ENCODE measurements at regions of chr4 and their contacts with region 1.

Region 1: GRCh38 chr4:167234316-167234881 is at the start of gene SPOCK3:
- DNase-seq: peak; percentile 5
- H3K4me3 Mint-ChIP-seq: no peak within 1 kb of the TSS
- H3K27ac Mint-ChIP-seq: no peak within 1 kb of the TSS
- H3K4me1 Mint-ChIP-seq: peaks cover 5% of the 10 kb centered on the region
- H3K27me3 Mint-ChIP-seq: peaks cover 26% of the 10 kb centered on the region
- total RNA-seq, gene SPOCK3: not detected

Region 2: DNA sequence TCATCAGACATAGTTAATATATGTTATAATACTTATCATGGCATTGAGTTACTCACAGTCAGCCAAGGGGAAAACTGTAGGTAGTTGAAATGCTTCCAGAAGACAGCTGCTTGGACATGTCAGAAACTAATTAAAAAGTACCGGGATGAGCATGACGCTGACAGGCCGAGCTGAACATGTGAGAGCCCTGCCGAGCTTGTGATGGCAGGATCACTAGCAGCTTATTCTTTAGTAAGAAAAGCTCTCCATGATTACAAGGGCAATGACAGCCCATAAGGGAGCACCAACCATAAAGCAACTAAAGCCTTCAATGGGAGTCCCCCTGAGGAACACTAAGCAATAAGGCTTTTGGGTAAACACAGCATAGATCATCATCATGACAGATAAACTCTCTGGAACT is 925.8 kb before region 1 on chr4:
- CTCF ChIA-PET with region 1: no interaction called
- intact Hi-C with region 1: loop called (anchors 10 kb)
- DNase-seq: no peak
- H3K4me3 Mint-ChIP-seq: no peak overlapping the region
- H3K27ac Mint-ChIP-seq: no peak overlapping the region
- H3K4me1 Mint-ChIP-seq: no peaks in the 10 kb centered on the region
- H3K27me3 Mint-ChIP-seq: no peaks in the 10 kb centered on the region

Measured in activated naive CD4-positive, alpha-beta T cell treated with anti-CD3 and anti-CD28 coated beads for 36 hours (primary cell).